ENCODE measurements at regions of chr7 and their contacts with region 1.

Region 1: DNA sequence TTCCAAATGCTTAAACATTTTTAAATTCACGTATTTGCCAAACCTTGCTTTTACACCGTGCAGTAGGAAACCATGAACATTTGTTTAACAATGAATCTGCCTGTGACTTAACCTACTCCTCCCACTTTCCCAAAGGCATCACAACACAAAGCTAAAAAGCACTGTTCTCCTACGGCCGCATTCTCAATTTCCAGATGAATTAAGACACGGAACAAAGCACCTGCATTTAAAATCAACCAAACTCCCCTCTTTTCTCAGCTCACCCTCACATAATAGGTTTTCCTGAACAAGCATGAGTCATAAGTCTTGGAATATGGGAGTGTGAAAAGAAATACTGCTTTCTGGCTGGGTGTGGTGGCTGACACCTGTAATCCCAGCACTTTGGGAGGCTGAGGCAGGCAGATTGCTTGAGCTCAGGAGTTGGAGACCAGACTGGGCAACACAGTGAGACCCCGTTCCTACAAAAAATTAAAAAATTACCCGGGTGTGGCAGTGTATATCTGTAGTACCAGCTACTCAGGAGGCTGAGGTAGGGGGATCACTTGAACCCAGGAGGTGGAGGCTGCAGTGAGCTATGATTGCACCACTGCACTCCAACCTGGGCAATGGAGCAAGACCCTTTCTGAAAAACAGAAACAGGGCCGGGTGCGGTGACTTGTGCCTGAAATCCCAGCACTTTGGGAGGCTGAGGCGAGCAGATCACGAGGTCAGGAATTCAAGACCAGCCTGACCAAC is 51.7 kb upstream of the CYTH3 start:
- DNase-seq: no peak
- H3K4me3 ChIP-seq: no peak overlapping the region
- H3K27ac ChIP-seq: no peak overlapping the region
- H3K4me1 ChIP-seq: no peaks in the 10 kb centered on the region
- H3K27me3 ChIP-seq: no peaks in the 10 kb centered on the region
- CTCF ChIP-seq: no peak

Region 2: GRCh38 chr7:6015917-6016652 is 308.0 kb before region 1 on chr7:
- intact Hi-C with region 1: no loop called
- DNase-seq: peak in 1 of 5 donors; percentile 84
- H3K4me3 ChIP-seq: no peak overlapping the region
- H3K27ac ChIP-seq: no peak overlapping the region
- H3K4me1 ChIP-seq: peaks cover 0 to 6% (median 5%) of the 10 kb centered on the region in 3 donors
- H3K27me3 ChIP-seq: no peaks in the 10 kb centered on the region
- CTCF ChIP-seq: no peak

Region 3: DNA sequence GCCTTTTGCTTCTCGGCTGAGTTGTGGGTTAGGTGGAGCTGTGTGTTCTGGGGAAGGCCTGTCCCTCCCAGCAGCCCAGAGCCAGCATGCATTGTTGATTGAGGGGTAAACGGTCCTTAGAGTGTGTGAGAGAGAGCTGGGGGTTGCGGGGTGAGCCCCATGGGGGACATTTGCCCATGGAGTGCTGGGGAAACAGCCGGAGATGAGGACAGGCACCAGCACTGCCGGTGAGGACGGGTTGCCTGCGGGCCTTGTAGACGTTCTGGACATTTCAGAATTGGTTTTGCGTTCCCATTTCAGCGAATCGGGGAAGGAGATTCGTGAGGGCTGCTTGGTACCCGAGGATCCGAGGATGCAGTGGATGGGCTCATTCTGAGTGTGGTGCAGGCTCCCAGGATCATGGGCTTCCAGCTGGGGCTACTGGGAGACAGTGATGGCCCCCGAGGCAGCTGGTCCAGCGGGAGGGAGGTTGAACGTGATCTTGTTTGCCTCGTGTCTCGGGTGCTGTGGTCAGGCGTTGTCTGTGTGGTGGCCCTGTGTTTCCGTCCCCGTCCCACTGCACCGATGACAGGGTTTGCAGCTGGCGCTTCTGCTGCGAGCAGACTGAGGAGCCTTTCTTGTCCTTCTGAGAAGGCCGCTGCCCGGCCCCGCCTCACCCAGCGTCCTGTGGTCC is 165.6 kb before region 1 on chr7:
- intact Hi-C with region 1: loop called (anchors 5 kb)
- DNase-seq: no peak
- H3K4me3 ChIP-seq: no peak overlapping the region
- H3K27ac ChIP-seq: no peak overlapping the region
- H3K4me1 ChIP-seq: peaks cover 0 to 11% (median 7%) of the 10 kb centered on the region in 3 donors
- H3K27me3 ChIP-seq: no peaks in the 10 kb centered on the region
- CTCF ChIP-seq: no peak